ENCODE measurements at regions of chr7 and their contacts with region 1.

Region 1: GRCh38 chr7:29408841-29409243 is 154.8 kb upstream of the PRR15 start:
- DNase-seq: peak; percentile 92

Region 2: GRCh38 chr7:28926871-28927597 is 481.8 kb before region 1 on chr7:
- in situ Hi-C with region 1: loop called (anchors 25 kb)
- DNase-seq: peak; percentile 98

Region 3: GRCh38 chr7:29105752-29106668 is 302.8 kb before region 1 on chr7:
- in situ Hi-C with region 1: loop called (anchors 25 kb)
- DNase-seq: peak; percentile 89

Region 4: DNA sequence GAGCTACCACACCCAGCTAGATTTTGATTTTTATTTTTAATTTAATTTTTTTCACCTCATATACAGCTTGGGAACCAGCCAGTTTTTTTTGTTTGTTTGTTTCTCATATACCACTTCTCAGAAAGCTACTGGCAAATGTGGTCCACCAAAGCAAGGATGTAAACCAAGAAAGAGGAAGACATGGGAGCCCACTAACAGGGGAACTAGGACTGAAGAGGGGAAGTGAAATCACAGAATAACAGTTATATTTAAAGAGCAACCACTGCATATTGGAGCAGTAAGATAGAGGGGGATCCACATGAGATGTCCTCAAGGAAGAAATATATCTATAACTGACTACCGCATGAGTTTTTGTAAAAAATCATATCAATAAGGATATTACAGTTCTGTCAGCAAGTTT is 273.0 kb before region 1 on chr7:
- in situ Hi-C with region 1: no loop called
- DNase-seq: no peak

Measured in SK-MEL-5 (cell line).